ENCODE measurements at regions of chr9 and their contacts with region 1.

Region 1: GRCh38 chr9:36788534-36788933 is 215.8 kb downstream of the MELK start:
- DNase-seq: no peak
- H3K4me3 ChIP-seq: no peak overlapping the region
- H3K4me1 ChIP-seq: no peaks in the 10 kb centered on the region
- H3K27me3 ChIP-seq: peaks cover 10% of the 10 kb centered on the region; the same call in 1 of the 2 replicates

Region 2: DNA sequence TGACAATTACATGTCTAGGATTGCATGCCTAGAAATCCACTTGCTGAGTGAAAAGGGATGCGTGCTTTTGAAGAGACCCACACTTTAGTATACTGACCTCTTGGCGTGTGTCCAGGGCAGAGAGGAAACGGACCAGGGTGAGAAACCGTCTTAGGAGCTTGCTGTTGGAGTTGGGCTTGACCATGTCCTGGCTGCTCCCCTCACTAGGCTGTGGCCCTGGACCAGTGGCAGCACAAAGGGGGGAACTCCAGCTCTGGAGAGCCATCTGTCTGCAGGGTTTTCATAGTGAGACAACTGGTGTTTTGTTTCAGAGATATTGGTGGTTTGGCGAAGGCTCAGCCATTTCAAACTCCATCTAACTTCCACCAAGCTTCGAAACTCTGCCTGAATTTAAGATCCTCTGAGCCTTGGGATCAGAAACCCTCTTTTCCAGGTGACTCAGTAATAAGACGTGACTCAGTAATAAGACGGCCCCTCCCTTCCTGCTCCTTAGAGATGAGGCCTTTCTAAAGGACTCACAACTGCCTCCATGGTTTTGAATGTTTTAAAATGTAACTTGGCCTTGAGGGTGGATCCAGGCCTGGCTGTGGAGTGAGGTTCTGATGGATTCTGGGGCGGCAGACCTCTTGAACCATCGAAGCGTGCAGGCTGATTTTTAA is 50.1 kb before region 1 on chr9:
- in situ Hi-C with region 1: loop called (anchors 10 kb)
- DNase-seq: no peak
- H3K4me3 ChIP-seq: no peak overlapping the region
- H3K4me1 ChIP-seq: no peaks in the 10 kb centered on the region
- H3K27me3 ChIP-seq: peaks cover 10% of the 10 kb centered on the region; the same call in 1 of the 2 replicates

Region 3: GRCh38 chr9:36991516-36992134 is 203.1 kb after region 1 on chr9:
- in situ Hi-C with region 1: no loop called
- DNase-seq: peak; percentile 37 to 79
- H3K4me3 ChIP-seq: no peak overlapping the region
- H3K4me1 ChIP-seq: no peaks in the 10 kb centered on the region; the same call in 1 of the 2 replicates
- H3K27me3 ChIP-seq: no peaks in the 10 kb centered on the region

Region 4: GRCh38 chr9:37104183-37104889 is 315.8 kb after region 1 on chr9:
- in situ Hi-C with region 1: no loop called
- DNase-seq: no peak
- H3K4me3 ChIP-seq: no peak overlapping the region
- H3K4me1 ChIP-seq: no peaks in the 10 kb centered on the region
- H3K27me3 ChIP-seq: no peaks in the 10 kb centered on the region

Region 5: GRCh38 chr9:37540634-37541033 is 752.1 kb after region 1 on chr9:
- in situ Hi-C with region 1: no loop called
- DNase-seq: no peak
- H3K4me3 ChIP-seq: no peak overlapping the region
- H3K4me1 ChIP-seq: no peaks in the 10 kb centered on the region
- H3K27me3 ChIP-seq: no peaks in the 10 kb centered on the region